HCT116 (cell line): ENCODE measurements at regions of chrX and their contacts with region 1.

Region 1: GRCh38 chrX:69615779-69616456 is at the start of gene EDA:
- DNase-seq: peak; percentile 61
- ATAC-seq: peak; percentile 96
- H3K4me3 ChIP-seq: peak within 1 kb of the TSS; percentile 54 to 61
- H3K27ac ChIP-seq: no peak within 1 kb of the TSS; the same call in 1 of the 2 replicates
- H3K4me1 ChIP-seq: peaks cover 0 to 3% of the 10 kb centered on the region in 2 experiments; a peak in 1 of 4 replicates
- H3K27me3 ChIP-seq: no peaks in the 10 kb centered on the region
- CTCF ChIP-seq: no peak
- POLR2A ChIP-seq: no peak
- RAD21 ChIP-seq: no peak
- total RNA-seq, gene EDA: 5.2 TPM

Region 2: GRCh38 chrX:68999356-68999755 is 616.6 kb before region 1 on chrX:
- CTCF ChIA-PET with region 1: no interaction called
- POLR2A ChIA-PET with region 1: no interaction called
- RAD21 ChIA-PET with region 1: no interaction called
- intact Hi-C with region 1: no loop called
- DNase-seq: peak; percentile 18
- ATAC-seq: peak; percentile 64
- H3K4me3 ChIP-seq: no peak overlapping the region
- H3K27ac ChIP-seq: no peak overlapping the region
- H3K4me1 ChIP-seq: peaks cover 0 to 14% of the 10 kb centered on the region in 2 experiments; a peak in 1 of 4 replicates
- H3K27me3 ChIP-seq: no peaks in the 10 kb centered on the region
- CTCF ChIP-seq: no peak
- POLR2A ChIP-seq: no peak
- RAD21 ChIP-seq: no peak

Region 3: GRCh38 chrX:69493193-69493592 is 122.7 kb before region 1 on chrX:
- CTCF ChIA-PET with region 1: interaction called, 6 read pairs
- POLR2A ChIA-PET with region 1: no interaction called
- RAD21 ChIA-PET with region 1: no interaction called
- intact Hi-C with region 1: loop called (anchors 1 kb)
- DNase-seq: peak; percentile 33
- ATAC-seq: peak; percentile 85
- H3K4me3 ChIP-seq: no peak overlapping the region
- H3K27ac ChIP-seq: no peak overlapping the region
- H3K4me1 ChIP-seq: peaks cover 0 to 6% of the 10 kb centered on the region in 2 experiments; a peak in 1 of 4 replicates
- H3K27me3 ChIP-seq: peaks cover 9% of the 10 kb centered on the region; the same call in 1 of the 2 replicates
- CTCF ChIP-seq: peak; percentile 39 to 53 (median 49); a peak in 5 of 6 replicates
- POLR2A ChIP-seq: no peak
- RAD21 ChIP-seq: peak; percentile 75

Region 4: GRCh38 chrX:69538321-69538876 is 77.5 kb before region 1 on chrX:
- CTCF ChIA-PET with region 1: interaction called, 13 read pairs
- POLR2A ChIA-PET with region 1: no interaction called
- RAD21 ChIA-PET with region 1: interaction called in 1 of 2 experiments, 7 read pairs
- intact Hi-C with region 1: loop called (anchors 1 kb)
- DNase-seq: peak; percentile 29
- ATAC-seq: peak; percentile 98
- H3K4me3 ChIP-seq: no peak overlapping the region
- H3K27ac ChIP-seq: no peak overlapping the region
- H3K4me1 ChIP-seq: peaks cover 0 to 4% of the 10 kb centered on the region in 2 experiments; a peak in 1 of 4 replicates
- H3K27me3 ChIP-seq: no peaks in the 10 kb centered on the region
- CTCF ChIP-seq: peak; percentile 60 to 69 (median 64)
- POLR2A ChIP-seq: no peak
- RAD21 ChIP-seq: peak; percentile 90